Calu3 (cell line): ENCODE measurements at regions of chr20 and their contacts with region 1.

Region 1: GRCh38 chr20:33370296-33370695 is 31.0 kb downstream of the CDK5RAP1 start:
- DNase-seq: no peak
- H3K4me3 Mint-ChIP-seq: no peak overlapping the region
- H3K27ac Mint-ChIP-seq: no peak overlapping the region
- H3K4me1 Mint-ChIP-seq: peaks cover 26% of the 10 kb centered on the region
- H3K27me3 Mint-ChIP-seq: no peaks in the 10 kb centered on the region
- CTCF ChIP-seq: no peak

Region 2: DNA sequence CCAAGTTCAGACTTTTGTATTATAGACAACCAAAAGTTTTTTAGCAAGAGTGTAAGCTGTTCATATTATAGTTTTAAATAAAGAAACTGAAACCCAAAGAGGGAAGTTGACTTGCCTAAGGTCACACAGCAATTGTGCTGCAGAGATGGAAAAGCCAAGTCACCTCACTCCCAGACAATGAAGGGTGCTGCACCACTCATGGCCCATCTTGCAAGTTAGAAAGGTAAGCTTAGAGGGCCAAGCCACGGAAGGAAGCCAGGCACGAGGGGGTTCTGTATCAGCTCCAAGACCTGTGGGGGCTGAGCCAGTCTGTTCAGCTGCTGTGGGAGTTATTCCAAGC is 1896.2 kb before region 1 on chr20:
- CTCF ChIA-PET with region 1: no interaction called
- intact Hi-C with region 1: no loop called
- DNase-seq: no peak
- H3K4me3 Mint-ChIP-seq: no peak overlapping the region
- H3K27ac Mint-ChIP-seq: no peak overlapping the region
- H3K4me1 Mint-ChIP-seq: no peaks in the 10 kb centered on the region
- H3K27me3 Mint-ChIP-seq: peaks cover 73% of the 10 kb centered on the region
- CTCF ChIP-seq: no peak

Region 3: DNA sequence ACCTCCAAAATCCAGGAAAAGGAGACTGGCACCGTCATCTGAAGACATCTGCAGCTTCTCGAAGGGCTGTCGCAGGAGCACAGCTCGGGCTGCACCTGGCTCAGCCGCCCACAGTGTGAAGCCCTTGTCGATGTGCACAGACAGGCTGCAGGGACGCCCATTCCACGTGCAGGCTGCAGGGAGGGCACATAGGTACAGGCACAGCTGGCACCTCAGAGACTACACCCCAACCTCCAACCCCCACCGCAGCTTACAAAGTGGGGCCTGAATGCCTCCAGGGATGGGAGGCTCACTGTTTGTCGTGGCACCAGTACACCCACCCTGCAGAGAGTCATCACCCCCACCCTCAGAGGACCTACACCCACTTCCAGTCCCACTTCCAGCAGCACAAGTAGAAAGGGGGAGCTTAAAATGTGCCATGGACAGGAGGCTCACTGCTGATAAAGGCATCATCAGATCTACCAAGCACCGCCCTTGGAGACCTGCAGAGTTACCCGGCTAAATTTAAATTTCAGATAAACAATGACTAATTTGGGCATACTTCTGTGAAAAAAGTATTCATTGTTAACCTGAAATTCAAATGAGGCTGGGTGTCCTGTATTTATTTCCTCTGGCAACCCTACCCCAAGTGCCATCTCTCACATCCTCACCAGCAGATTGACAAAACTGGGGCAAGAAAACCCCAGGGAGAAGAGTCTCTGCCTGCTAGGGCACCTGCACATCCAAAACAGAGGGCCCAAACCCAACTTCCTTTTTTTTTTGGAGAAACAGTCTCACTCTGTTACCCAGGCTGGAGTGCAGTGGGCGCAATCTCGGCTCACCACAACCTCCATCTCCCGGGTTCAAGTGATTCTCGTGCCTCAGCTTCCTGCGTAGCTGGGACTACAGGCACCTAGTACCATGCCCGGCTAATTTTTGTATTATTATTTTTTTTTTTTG is 38.7 kb after region 1 on chr20:
- CTCF ChIA-PET with region 1: no interaction called
- intact Hi-C with region 1: no loop called
- DNase-seq: no peak
- H3K4me3 Mint-ChIP-seq: no peak overlapping the region
- H3K27ac Mint-ChIP-seq: no peak overlapping the region
- H3K4me1 Mint-ChIP-seq: no peaks in the 10 kb centered on the region
- H3K27me3 Mint-ChIP-seq: no peaks in the 10 kb centered on the region
- CTCF ChIP-seq: no peak

Region 4: GRCh38 chr20:33515569-33516216 is 145.4 kb after region 1 on chr20:
- CTCF ChIA-PET with region 1: interaction called, 11 read pairs
- intact Hi-C with region 1: no loop called
- DNase-seq: peak; percentile 14
- H3K4me3 Mint-ChIP-seq: no peak overlapping the region
- H3K27ac Mint-ChIP-seq: no peak overlapping the region
- H3K4me1 Mint-ChIP-seq: peaks cover 31% of the 10 kb centered on the region
- H3K27me3 Mint-ChIP-seq: no peaks in the 10 kb centered on the region
- CTCF ChIP-seq: peak; percentile 47